CD4-positive, alpha-beta T cell (primary cell): ENCODE measurements at regions of chr11 and their contacts with region 1.

Region 1: GRCh38 chr11:5684646-5685362 is at the start of gene TRIM5:
- DNase-seq: peak; percentile 54 to 92 (median 72)
- ATAC-seq: peak; percentile 84
- H3K4me3 ChIP-seq: peak within 1 kb of the TSS; percentile 72
- H3K4me3 Mint-ChIP-seq: peak within 1 kb of the TSS; percentile 94
- H3K27ac ChIP-seq: peak within 1 kb of the TSS; percentile 89 to 90
- H3K27ac Mint-ChIP-seq: peak within 1 kb of the TSS; percentile 88
- H3K4me1 ChIP-seq: peaks cover 38% of the 10 kb centered on the region
- H3K4me1 Mint-ChIP-seq: peaks cover 70% of the 10 kb centered on the region
- H3K27me3 ChIP-seq: no peaks in the 10 kb centered on the region
- H3K27me3 Mint-ChIP-seq: no peaks in the 10 kb centered on the region
- CTCF ChIP-seq: peak; percentile 76
- total RNA-seq, gene TRIM5: 5.9 to 8.0 TPM

Region 2: GRCh38 chr11:4393209-4393857 is 1291.5 kb before region 1 on chr11 and contains the start of gene TRIM21:
- CTCF ChIA-PET with region 1: no interaction called
- POLR2A ChIA-PET with region 1: no interaction called
- intact Hi-C with region 1: loop called in 1 of 2 experiments (anchors 10 kb)
- DNase-seq: peak; percentile 71 to 93 (median 88)
- ATAC-seq: peak; percentile 99
- H3K4me3 ChIP-seq: peak within 1 kb of the TSS; percentile 87
- H3K4me3 Mint-ChIP-seq: peak within 1 kb of the TSS; percentile 84
- H3K27ac ChIP-seq: peak within 1 kb of the TSS; percentile 54 to 68
- H3K27ac Mint-ChIP-seq: peak within 1 kb of the TSS; percentile 79
- H3K4me1 ChIP-seq: peaks cover 13% of the 10 kb centered on the region
- H3K4me1 Mint-ChIP-seq: peaks cover 54% of the 10 kb centered on the region
- H3K27me3 ChIP-seq: peaks cover 3 to 7% of the 10 kb centered on the region in 2 experiments
- H3K27me3 Mint-ChIP-seq: peaks cover 10% of the 10 kb centered on the region
- CTCF ChIP-seq: no peak
- total RNA-seq, gene TRIM21: 21.0 to 23.7 TPM

Region 3: GRCh38 chr11:5476184-5476819 is 208.5 kb before region 1 on chr11:
- CTCF ChIA-PET with region 1: no interaction called
- POLR2A ChIA-PET with region 1: no interaction called
- intact Hi-C with region 1: loop called in 1 of 2 experiments (anchors 5 kb)
- DNase-seq: peak in 13 of 14 experiments; percentile 2 to 64 (median 7)
- ATAC-seq: no peak
- H3K4me3 ChIP-seq: no peak overlapping the region
- H3K4me3 Mint-ChIP-seq: no peak overlapping the region
- H3K27ac ChIP-seq: no peak overlapping the region
- H3K27ac Mint-ChIP-seq: no peak overlapping the region
- H3K4me1 ChIP-seq: no peaks in the 10 kb centered on the region
- H3K4me1 Mint-ChIP-seq: no peaks in the 10 kb centered on the region
- H3K27me3 ChIP-seq: peaks cover 5 to 7% of the 10 kb centered on the region in 2 experiments
- H3K27me3 Mint-ChIP-seq: peaks cover 33% of the 10 kb centered on the region
- CTCF ChIP-seq: peak; percentile 73

Region 4: GRCh38 chr11:5564259-5565019 is 120.4 kb before region 1 on chr11:
- CTCF ChIA-PET with region 1: no interaction called
- POLR2A ChIA-PET with region 1: no interaction called
- intact Hi-C with region 1: no loop called
- DNase-seq: no peak
- ATAC-seq: no peak
- H3K4me3 ChIP-seq: no peak overlapping the region
- H3K4me3 Mint-ChIP-seq: no peak overlapping the region
- H3K27ac ChIP-seq: no peak overlapping the region
- H3K27ac Mint-ChIP-seq: no peak overlapping the region
- H3K4me1 ChIP-seq: no peaks in the 10 kb centered on the region
- H3K4me1 Mint-ChIP-seq: peaks cover 6% of the 10 kb centered on the region
- H3K27me3 ChIP-seq: no peaks in the 10 kb centered on the region
- H3K27me3 Mint-ChIP-seq: no peaks in the 10 kb centered on the region
- CTCF ChIP-seq: no peak

Region 5: DNA sequence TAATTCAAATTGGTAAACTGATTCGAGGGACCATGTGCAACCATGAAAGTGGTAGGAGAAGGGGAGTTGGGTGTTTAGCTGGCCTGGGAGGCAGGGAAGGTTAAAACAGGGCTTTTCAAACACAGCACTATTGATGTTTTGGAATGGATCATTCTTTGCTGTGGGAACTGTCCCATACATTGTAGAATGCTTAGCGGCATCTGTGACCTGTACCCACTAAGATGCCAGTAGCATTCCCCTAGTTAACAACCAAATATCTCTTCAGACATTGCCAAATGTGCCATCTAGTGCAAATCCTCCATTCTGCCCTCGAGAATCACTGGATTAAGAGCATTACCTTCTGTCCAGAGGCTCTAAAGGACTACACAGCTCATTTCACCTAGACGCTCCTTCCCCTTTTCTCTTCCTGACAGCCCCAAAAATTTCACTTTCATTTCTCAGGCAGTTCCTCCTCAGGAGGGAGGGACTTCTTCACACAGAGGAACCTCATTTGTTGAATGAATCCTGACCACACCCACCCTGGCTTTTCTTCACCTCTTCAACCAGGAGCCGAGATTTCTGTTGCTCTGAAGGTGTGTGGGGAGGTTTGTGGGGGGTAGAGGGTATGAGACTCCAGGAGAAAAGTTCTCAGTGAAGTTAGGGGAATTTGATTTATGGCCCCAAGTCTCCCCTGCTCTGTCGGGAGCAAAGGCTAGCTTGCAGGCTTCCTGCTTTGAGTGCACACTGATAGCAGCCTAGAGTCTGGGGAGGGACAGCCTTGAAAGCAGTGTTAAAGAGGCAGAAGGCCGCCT is 60.1 kb before region 1 on chr11 and contains the start of gene TRIM34:
- CTCF ChIA-PET with region 1: interaction called, 3 read pairs
- POLR2A ChIA-PET with region 1: interaction called, 11 read pairs
- intact Hi-C with region 1: loop called (anchors 2 to 5 kb)
- DNase-seq: peak; percentile 18 to 87 (median 47)
- ATAC-seq: peak; percentile 98
- H3K4me3 ChIP-seq: peak within 1 kb of the TSS; percentile 63
- H3K4me3 Mint-ChIP-seq: peak within 1 kb of the TSS; percentile 90
- H3K27ac ChIP-seq: peak within 1 kb of the TSS; percentile 43 to 50
- H3K27ac Mint-ChIP-seq: peak within 1 kb of the TSS; percentile 84
- H3K4me1 ChIP-seq: peaks cover 27% of the 10 kb centered on the region
- H3K4me1 Mint-ChIP-seq: peaks cover 53% of the 10 kb centered on the region
- H3K27me3 ChIP-seq: no peaks in the 10 kb centered on the region
- H3K27me3 Mint-ChIP-seq: no peaks in the 10 kb centered on the region
- CTCF ChIP-seq: no peak
- total RNA-seq, gene TRIM34: 3.0 to 3.5 TPM

Region 6: DNA sequence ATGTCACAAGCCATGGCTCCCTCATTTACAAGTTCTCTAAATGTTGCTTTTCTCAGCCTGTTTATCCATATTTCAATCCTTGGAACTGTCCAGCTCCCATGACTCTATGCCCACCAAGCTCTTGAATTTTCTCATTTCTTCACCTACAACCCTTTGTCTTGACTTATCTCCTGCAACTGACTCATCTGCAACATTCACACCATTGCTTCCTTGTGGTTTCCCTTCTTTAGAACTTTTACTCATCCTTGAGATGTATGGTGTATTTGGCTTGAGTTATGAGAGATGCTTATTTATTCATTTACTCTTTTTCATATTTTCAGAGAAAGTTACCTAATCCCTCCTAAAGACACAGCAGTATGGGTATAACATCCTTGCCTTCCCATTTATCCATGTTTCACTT is 41.2 kb before region 1 on chr11:
- CTCF ChIA-PET with region 1: no interaction called
- POLR2A ChIA-PET with region 1: no interaction called
- intact Hi-C with region 1: no loop called
- DNase-seq: no peak
- ATAC-seq: no peak
- H3K4me3 ChIP-seq: no peak overlapping the region
- H3K4me3 Mint-ChIP-seq: no peak overlapping the region
- H3K27ac ChIP-seq: no peak overlapping the region
- H3K27ac Mint-ChIP-seq: no peak overlapping the region
- H3K4me1 ChIP-seq: no peaks in the 10 kb centered on the region
- H3K4me1 Mint-ChIP-seq: no peaks in the 10 kb centered on the region
- H3K27me3 ChIP-seq: no peaks in the 10 kb centered on the region
- H3K27me3 Mint-ChIP-seq: no peaks in the 10 kb centered on the region
- CTCF ChIP-seq: no peak

Region 7: GRCh38 chr11:5700421-5701054 is 15.7 kb after region 1 on chr11:
- CTCF ChIA-PET with region 1: interaction called, 12 read pairs
- POLR2A ChIA-PET with region 1: interaction called, 17 read pairs
- intact Hi-C with region 1: loop called in 1 of 2 experiments (anchors 2 kb)
- DNase-seq: no peak
- ATAC-seq: no peak
- H3K4me3 ChIP-seq: no peak overlapping the region
- H3K4me3 Mint-ChIP-seq: no peak overlapping the region
- H3K27ac ChIP-seq: no peak overlapping the region
- H3K27ac Mint-ChIP-seq: peak overlapping the region; percentile 52
- H3K4me1 ChIP-seq: peaks cover 12% of the 10 kb centered on the region
- H3K4me1 Mint-ChIP-seq: peaks cover 56% of the 10 kb centered on the region
- H3K27me3 ChIP-seq: no peaks in the 10 kb centered on the region
- H3K27me3 Mint-ChIP-seq: no peaks in the 10 kb centered on the region
- CTCF ChIP-seq: no peak

Region 8: GRCh38 chr11:5712507-5712906 is 27.7 kb after region 1 on chr11:
- CTCF ChIA-PET with region 1: interaction called, 9 read pairs
- POLR2A ChIA-PET with region 1: interaction called, 19 read pairs
- intact Hi-C with region 1: loop called in 1 of 2 experiments (anchors 1 kb)
- DNase-seq: peak in 3 of 14 experiments; percentile 38 to 42 (median 42)
- ATAC-seq: no peak
- H3K4me3 ChIP-seq: no peak overlapping the region
- H3K4me3 Mint-ChIP-seq: no peak overlapping the region
- H3K27ac ChIP-seq: no peak overlapping the region
- H3K27ac Mint-ChIP-seq: peak overlapping the region; percentile 47
- H3K4me1 ChIP-seq: no peaks in the 10 kb centered on the region
- H3K4me1 Mint-ChIP-seq: no peaks in the 10 kb centered on the region
- H3K27me3 ChIP-seq: no peaks in the 10 kb centered on the region
- H3K27me3 Mint-ChIP-seq: no peaks in the 10 kb centered on the region
- CTCF ChIP-seq: peak; percentile 58

Region 9: DNA sequence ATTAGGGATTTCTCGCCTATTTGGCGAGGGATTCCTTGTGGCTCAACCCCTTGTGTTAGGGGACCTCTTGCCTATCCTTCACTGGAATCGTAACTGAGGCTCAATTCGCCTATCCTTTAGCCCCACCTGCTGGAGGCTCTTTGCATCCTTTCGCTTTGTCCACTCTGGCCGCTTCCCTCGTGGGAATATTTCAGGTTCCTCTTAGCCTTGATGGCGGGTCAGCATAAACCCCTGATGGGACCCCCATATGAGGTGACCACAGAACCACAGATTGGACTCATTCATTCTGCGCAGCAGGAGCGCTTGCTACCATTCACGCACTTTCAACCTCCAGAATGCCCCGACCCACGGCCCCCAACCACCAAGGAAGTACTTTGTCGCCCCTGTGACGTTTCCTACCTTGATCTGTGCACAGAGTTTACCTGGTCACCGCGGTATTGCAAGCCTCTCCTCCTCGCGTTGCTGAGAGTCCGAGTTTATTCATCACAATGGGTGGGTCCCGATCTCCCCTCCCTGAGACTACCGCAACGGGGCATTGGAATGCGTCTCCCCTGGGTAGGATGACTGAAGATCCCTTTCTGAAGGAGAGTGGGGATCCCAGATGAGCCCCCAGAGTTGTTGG is 123.8 kb after region 1 on chr11 and contains the start of gene OR52N2:
- CTCF ChIA-PET with region 1: no interaction called
- POLR2A ChIA-PET with region 1: no interaction called
- intact Hi-C with region 1: loop called (anchors 1 to 5 kb)
- DNase-seq: peak; percentile 46 to 85 (median 63)
- ATAC-seq: peak; percentile 78
- H3K4me3 ChIP-seq: peak within 1 kb of the TSS; percentile 55
- H3K4me3 Mint-ChIP-seq: peak within 1 kb of the TSS; percentile 89
- H3K27ac ChIP-seq: no peak within 1 kb of the TSS
- H3K27ac Mint-ChIP-seq: no peak within 1 kb of the TSS
- H3K4me1 ChIP-seq: peaks cover 8% of the 10 kb centered on the region
- H3K4me1 Mint-ChIP-seq: peaks cover 6% of the 10 kb centered on the region
- H3K27me3 ChIP-seq: peaks cover 0 to 8% of the 10 kb centered on the region in 2 experiments
- H3K27me3 Mint-ChIP-seq: peaks cover 38% of the 10 kb centered on the region
- CTCF ChIP-seq: peak; percentile 86
- total RNA-seq, gene OR52N2: not detected